T-cell (primary cell): ENCODE measurements at regions of chr7 and their contacts with region 1.

Region 1: GRCh38 chr7:36683695-36684357 is 40.5 kb downstream of the AOAH start:
- DNase-seq: no peak
- ATAC-seq: no peak
- H3K4me3 ChIP-seq: no peak overlapping the region
- H3K4me3 Mint-ChIP-seq: no peak overlapping the region
- H3K27ac ChIP-seq: no peak overlapping the region
- H3K27ac Mint-ChIP-seq: peak overlapping the region in 1 of 2 donors; percentile 44
- H3K4me1 ChIP-seq: peaks cover 13 to 15% of the 10 kb centered on the region in 2 experiments
- H3K4me1 Mint-ChIP-seq: peaks cover 39 to 53% (median 39%) of the 10 kb centered on the region in 3 donors
- H3K27me3 ChIP-seq: no peaks in the 10 kb centered on the region
- H3K27me3 Mint-ChIP-seq: no peaks in the 10 kb centered on the region

Region 2: GRCh38 chr7:36670585-36671431 is 13.0 kb before region 1 on chr7:
- CTCF ChIA-PET with region 1: interaction called, 7 to 28 read pairs
- POLR2A ChIA-PET with region 1: interaction called in 1 of 2 experiments, 3 read pairs
- DNase-seq: peak; percentile 51 to 91 (median 66)
- ATAC-seq: peak; percentile 83 to 92 (median 87)
- H3K4me3 ChIP-seq: no peak overlapping the region
- H3K4me3 Mint-ChIP-seq: peak overlapping the region in 1 of 3 donors; percentile 42
- H3K27ac ChIP-seq: no peak overlapping the region
- H3K27ac Mint-ChIP-seq: peak overlapping the region; percentile 44 to 62
- H3K4me1 ChIP-seq: peaks cover 4 to 29% of the 10 kb centered on the region in 2 experiments
- H3K4me1 Mint-ChIP-seq: peaks cover 27 to 38% (median 30%) of the 10 kb centered on the region in 3 donors
- H3K27me3 ChIP-seq: no peaks in the 10 kb centered on the region
- H3K27me3 Mint-ChIP-seq: no peaks in the 10 kb centered on the region